GM12878 (cell line): ENCODE measurements at regions of chr2 and their contacts with region 1.

Region 1: DNA sequence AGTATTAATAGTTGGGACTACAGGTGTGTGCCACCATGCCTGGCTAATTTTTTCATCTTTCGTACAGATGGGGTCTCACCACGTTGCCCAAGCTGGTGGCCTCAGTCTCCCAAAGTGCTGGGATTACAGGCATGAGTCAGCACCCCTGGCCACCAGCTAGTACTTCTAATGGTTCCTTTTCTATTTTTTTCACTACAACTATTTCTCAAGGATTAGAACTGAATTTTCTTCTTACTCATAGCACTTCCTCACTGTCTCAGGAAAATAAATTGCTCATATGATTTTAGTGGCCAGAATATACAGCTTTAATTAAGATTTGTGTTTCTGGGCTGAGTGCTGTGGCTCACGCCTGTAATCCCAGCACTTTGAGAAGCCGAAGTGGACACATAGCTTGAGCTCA is 43.2 kb upstream of the SOS1 start:
- DNase-seq: no peak
- ATAC-seq: no peak
- H3K4me3 ChIP-seq: no peak overlapping the region
- H3K27ac ChIP-seq: no peak overlapping the region
- H3K4me1 ChIP-seq: no peaks in the 10 kb centered on the region
- H3K27me3 ChIP-seq: no peaks in the 10 kb centered on the region
- CTCF ChIP-seq: no peak
- EP300 ChIP-seq: no peak
- POLR2A ChIP-seq: no peak
- RAD21 ChIP-seq: no peak

Region 2: GRCh38 chr2:38900726-38901125 is 263.4 kb before region 1 on chr2:
- CTCF ChIA-PET with region 1: no interaction called
- POLR2A ChIA-PET with region 1: interaction called, 10 read pairs
- RAD21 ChIA-PET with region 1: no interaction called
- SMC1A ChIA-PET with region 1: interaction called, 3 read pairs
- in situ Hi-C with region 1: no loop called
- intact Hi-C with region 1: no loop called
- DNase-seq: no peak
- ATAC-seq: no peak
- H3K4me3 ChIP-seq: no peak overlapping the region
- H3K27ac ChIP-seq: no peak overlapping the region
- H3K4me1 ChIP-seq: peaks cover 6% of the 10 kb centered on the region; the same call in 1 of the 2 replicates
- H3K27me3 ChIP-seq: no peaks in the 10 kb centered on the region
- CTCF ChIP-seq: no peak
- EP300 ChIP-seq: no peak
- POLR2A ChIP-seq: no peak
- RAD21 ChIP-seq: no peak

Region 3: DNA sequence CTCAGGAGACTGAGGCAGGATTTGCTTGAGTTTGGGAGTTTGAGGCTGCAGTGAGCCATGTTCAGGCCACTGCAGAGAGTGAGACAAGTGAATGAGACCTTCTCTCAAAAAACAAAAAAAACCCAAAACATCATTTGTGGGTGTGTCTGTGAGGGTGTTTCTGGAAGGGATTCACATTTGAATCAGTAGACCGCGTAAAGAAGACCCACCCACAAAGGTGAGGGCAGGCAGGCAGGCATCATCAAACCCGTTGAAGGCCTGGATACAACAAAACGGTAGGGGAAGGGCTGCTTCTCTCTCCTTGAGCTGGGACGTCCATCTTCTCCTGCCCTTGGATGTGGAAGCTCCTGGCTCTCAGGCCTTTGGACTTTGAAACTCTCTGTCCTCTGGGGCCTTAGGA is 54.3 kb after region 1 on chr2:
- CTCF ChIA-PET with region 1: no interaction called
- POLR2A ChIA-PET with region 1: no interaction called
- RAD21 ChIA-PET with region 1: no interaction called
- SMC1A ChIA-PET with region 1: no interaction called
- in situ Hi-C with region 1: no loop called
- intact Hi-C with region 1: no loop called
- DNase-seq: no peak
- ATAC-seq: no peak
- H3K4me3 ChIP-seq: no peak overlapping the region
- H3K27ac ChIP-seq: no peak overlapping the region
- H3K4me1 ChIP-seq: no peaks in the 10 kb centered on the region
- H3K27me3 ChIP-seq: no peaks in the 10 kb centered on the region
- CTCF ChIP-seq: no peak
- EP300 ChIP-seq: no peak
- POLR2A ChIP-seq: no peak
- RAD21 ChIP-seq: no peak